Activated CD4-positive, alpha-beta memory T cell treated with anti-CD3 and anti-CD28 coated beads, Interleukin-2, amount 10 ng/mL, durations not matched to agents 7 days and 5 days (primary cell): ENCODE measurements at regions of chr7 and their contacts with region 1.

Region 1: GRCh38 chr7:92447345-92448204 is at the start of gene GATAD1:
- DNase-seq: peak; percentile 84
- H3K4me3 Mint-ChIP-seq: peak within 1 kb of the TSS; percentile 86
- H3K27ac Mint-ChIP-seq: peak within 1 kb of the TSS; percentile 88
- H3K4me1 Mint-ChIP-seq: peaks cover 13% of the 10 kb centered on the region
- H3K27me3 Mint-ChIP-seq: peaks cover 1% of the 10 kb centered on the region
- total RNA-seq, gene GATAD1: 17.4 to 18.5 TPM

Region 2: GRCh38 chr7:91835846-91836368 is 611.7 kb before region 1 on chr7:
- CTCF ChIA-PET with region 1: interaction called, 17 read pairs
- POLR2A ChIA-PET with region 1: no interaction called
- DNase-seq: no peak
- H3K4me3 Mint-ChIP-seq: no peak overlapping the region
- H3K27ac Mint-ChIP-seq: no peak overlapping the region
- H3K4me1 Mint-ChIP-seq: no peaks in the 10 kb centered on the region
- H3K27me3 Mint-ChIP-seq: no peaks in the 10 kb centered on the region

Region 3: DNA sequence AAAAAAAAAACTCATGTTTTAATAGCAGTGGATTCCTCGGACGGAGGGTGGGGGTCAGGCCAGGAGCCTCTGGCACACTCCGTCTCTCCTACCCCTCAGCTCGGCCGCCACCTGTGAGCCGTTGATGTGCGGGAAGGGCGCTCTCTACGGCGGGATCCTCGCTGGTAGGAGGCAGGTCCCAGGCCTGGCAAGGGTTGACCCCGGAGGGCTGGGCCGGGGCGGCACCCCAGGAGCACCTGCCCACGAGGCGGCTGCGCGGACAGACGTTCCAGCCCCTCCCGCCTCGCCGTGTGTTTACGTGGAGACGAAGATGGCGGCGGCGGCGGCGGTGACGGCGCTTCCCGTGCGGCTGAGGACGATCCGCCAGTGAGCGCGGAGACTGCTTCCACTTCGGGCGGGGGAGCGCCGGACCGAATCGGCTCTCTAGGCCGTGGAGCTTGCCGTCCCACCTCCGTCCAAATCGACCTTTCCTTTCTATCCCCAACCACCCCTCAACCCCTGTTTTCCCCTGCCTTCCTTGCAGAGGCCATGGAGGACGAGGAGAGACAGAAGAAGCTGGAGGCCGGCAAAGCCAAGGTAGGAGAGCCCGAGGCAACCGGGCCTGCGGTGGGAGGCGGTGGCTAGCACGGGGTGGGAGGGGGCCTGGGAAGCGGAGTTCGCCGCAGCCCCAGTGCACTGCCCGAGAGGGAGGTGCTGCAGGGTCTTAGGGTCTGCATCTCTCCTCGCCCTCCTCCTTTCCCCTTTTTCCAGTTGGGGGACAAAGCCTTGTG is 506.8 kb before region 1 on chr7 and contains the start of gene AKAP9:
- CTCF ChIA-PET with region 1: interaction called, 13 read pairs
- POLR2A ChIA-PET with region 1: interaction called, 11 read pairs
- DNase-seq: peak; percentile 90
- H3K4me3 Mint-ChIP-seq: peak within 1 kb of the TSS; percentile 89
- H3K27ac Mint-ChIP-seq: peak within 1 kb of the TSS; percentile 91
- H3K4me1 Mint-ChIP-seq: peaks cover 33% of the 10 kb centered on the region
- H3K27me3 Mint-ChIP-seq: no peaks in the 10 kb centered on the region
- total RNA-seq, gene AKAP9: 32.4 to 41.7 TPM

Region 4: GRCh38 chr7:92245487-92246362 is 201.8 kb before region 1 on chr7 and contains the starts of genes ANKIB1 and KRIT1:
- CTCF ChIA-PET with region 1: interaction called, 35 read pairs
- POLR2A ChIA-PET with region 1: interaction called, 47 read pairs
- DNase-seq: peak; percentile 89
- H3K4me3 Mint-ChIP-seq: peak within 1 kb of the TSS; percentile 98
- H3K27ac Mint-ChIP-seq: peak within 1 kb of the TSS; percentile 97
- H3K4me1 Mint-ChIP-seq: peaks cover 45% of the 10 kb centered on the region
- H3K27me3 Mint-ChIP-seq: no peaks in the 10 kb centered on the region
- total RNA-seq, gene ANKIB1: 65.1 to 70.2 TPM
- total RNA-seq, gene KRIT1: 39.5 to 42.4 TPM

Region 5: DNA sequence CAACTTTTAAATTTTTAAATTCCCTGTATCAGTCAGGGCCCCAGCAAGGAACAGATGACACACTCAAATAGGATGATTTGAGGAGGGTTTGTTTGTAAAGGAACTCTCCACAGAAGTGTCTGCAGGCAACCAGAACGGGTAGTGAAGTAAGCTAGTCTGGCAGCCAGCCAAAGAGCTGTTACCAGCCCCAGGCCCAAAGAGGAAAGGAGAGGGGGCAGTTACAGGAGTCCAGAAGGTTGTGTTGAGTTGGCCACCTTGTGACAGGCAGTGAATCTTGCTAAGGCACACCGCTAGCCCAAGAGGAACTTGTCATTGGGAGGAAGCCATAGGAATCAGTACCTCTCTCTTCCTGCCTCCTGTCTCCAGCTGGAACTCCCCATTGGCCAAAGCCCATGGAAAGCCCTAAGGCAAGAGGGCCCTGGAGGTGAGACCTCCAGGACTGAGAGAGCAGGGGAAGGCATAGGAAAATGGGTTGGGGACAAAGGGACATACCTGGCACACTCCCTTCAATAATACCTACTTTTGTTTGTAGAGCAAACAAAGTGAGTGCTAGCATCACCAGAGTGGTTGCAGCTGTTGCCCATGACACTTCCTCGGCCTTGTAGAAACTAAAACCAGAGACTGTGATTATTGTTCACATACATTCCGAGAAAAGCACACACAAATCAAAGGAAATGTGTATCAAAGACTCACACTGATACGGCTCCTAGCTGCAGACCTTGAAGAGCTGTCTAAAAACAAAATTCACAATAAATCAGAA is 25.7 kb before region 1 on chr7:
- CTCF ChIA-PET with region 1: interaction called, 75 read pairs
- POLR2A ChIA-PET with region 1: interaction called, 37 read pairs
- DNase-seq: no peak
- H3K4me3 Mint-ChIP-seq: no peak overlapping the region
- H3K27ac Mint-ChIP-seq: no peak overlapping the region
- H3K4me1 Mint-ChIP-seq: peaks cover 28% of the 10 kb centered on the region
- H3K27me3 Mint-ChIP-seq: peaks cover 10% of the 10 kb centered on the region

Region 6: GRCh38 chr7:92528188-92528957 is 80.8 kb after region 1 on chr7 and contains the starts of genes PEX1 and RBM48:
- CTCF ChIA-PET with region 1: interaction called, 32 read pairs
- POLR2A ChIA-PET with region 1: interaction called, 33 read pairs
- DNase-seq: peak; percentile 96
- H3K4me3 Mint-ChIP-seq: peak within 1 kb of the TSS; percentile 87
- H3K27ac Mint-ChIP-seq: peak within 1 kb of the TSS; percentile 91
- H3K4me1 Mint-ChIP-seq: peaks cover 31% of the 10 kb centered on the region
- H3K27me3 Mint-ChIP-seq: no peaks in the 10 kb centered on the region
- total RNA-seq, gene PEX1: 15.0 to 16.4 TPM
- total RNA-seq, gene RBM48: 15.0 to 17.8 TPM

Region 7: DNA sequence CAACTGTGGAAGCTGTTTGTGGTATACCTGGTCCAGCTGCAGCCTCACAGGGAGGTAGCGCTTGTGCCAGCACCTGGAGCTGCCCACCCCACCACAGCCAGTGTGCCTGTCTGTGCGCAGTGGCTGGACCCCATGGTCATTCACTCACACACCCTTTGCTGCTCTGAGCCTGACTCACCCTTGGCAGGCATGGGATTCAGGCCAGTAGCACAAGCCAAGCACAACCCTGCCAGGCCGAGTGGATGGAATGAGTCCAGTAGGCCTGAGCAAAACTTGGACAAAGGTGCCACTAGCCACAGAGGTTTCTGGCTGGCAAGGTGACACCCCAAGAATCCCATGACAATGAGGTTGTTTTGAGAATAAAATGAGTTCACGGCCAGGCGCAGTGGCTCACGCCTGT is 100.0 kb after region 1 on chr7:
- CTCF ChIA-PET with region 1: no interaction called
- POLR2A ChIA-PET with region 1: no interaction called
- DNase-seq: no peak
- H3K4me3 Mint-ChIP-seq: no peak overlapping the region
- H3K27ac Mint-ChIP-seq: no peak overlapping the region
- H3K4me1 Mint-ChIP-seq: no peaks in the 10 kb centered on the region
- H3K27me3 Mint-ChIP-seq: peaks cover 7% of the 10 kb centered on the region

Region 8: GRCh38 chr7:92567460-92567859 is 119.9 kb after region 1 on chr7:
- CTCF ChIA-PET with region 1: no interaction called
- POLR2A ChIA-PET with region 1: no interaction called
- DNase-seq: no peak
- H3K4me3 Mint-ChIP-seq: no peak overlapping the region
- H3K27ac Mint-ChIP-seq: no peak overlapping the region
- H3K4me1 Mint-ChIP-seq: peaks cover 2% of the 10 kb centered on the region
- H3K27me3 Mint-ChIP-seq: no peaks in the 10 kb centered on the region